Left lung (tissue), 14 donors: ENCODE measurements at regions of chr5 and their contacts with region 1.

Region 1: GRCh38 chr5:154811653-154812365 is 38.6 kb downstream of the FAXDC2 start:
- DNase-seq: peak in 3 of 4 donors; percentile 33 to 67 (median 52)
- ATAC-seq: peak; percentile 89
- H3K4me3 ChIP-seq: no peak overlapping the region
- H3K27ac ChIP-seq: no peak overlapping the region
- H3K4me1 ChIP-seq: peaks cover 0 to 16% of the 10 kb centered on the region in 2 donors
- H3K27me3 ChIP-seq: no peaks in the 10 kb centered on the region
- CTCF ChIP-seq: peak; percentile 68 to 93

Region 2: GRCh38 chr5:154371687-154372086 is 440.1 kb before region 1 on chr5:
- intact Hi-C with region 1: no loop called
- DNase-seq: peak in 1 of 4 donors; percentile 38
- ATAC-seq: peak; percentile 73
- H3K4me3 ChIP-seq: no peak overlapping the region
- H3K27ac ChIP-seq: no peak overlapping the region
- H3K4me1 ChIP-seq: peaks cover 11% of the 10 kb centered on the region in 2 donors
- H3K27me3 ChIP-seq: no peaks in the 10 kb centered on the region
- CTCF ChIP-seq: no peak

Region 3: DNA sequence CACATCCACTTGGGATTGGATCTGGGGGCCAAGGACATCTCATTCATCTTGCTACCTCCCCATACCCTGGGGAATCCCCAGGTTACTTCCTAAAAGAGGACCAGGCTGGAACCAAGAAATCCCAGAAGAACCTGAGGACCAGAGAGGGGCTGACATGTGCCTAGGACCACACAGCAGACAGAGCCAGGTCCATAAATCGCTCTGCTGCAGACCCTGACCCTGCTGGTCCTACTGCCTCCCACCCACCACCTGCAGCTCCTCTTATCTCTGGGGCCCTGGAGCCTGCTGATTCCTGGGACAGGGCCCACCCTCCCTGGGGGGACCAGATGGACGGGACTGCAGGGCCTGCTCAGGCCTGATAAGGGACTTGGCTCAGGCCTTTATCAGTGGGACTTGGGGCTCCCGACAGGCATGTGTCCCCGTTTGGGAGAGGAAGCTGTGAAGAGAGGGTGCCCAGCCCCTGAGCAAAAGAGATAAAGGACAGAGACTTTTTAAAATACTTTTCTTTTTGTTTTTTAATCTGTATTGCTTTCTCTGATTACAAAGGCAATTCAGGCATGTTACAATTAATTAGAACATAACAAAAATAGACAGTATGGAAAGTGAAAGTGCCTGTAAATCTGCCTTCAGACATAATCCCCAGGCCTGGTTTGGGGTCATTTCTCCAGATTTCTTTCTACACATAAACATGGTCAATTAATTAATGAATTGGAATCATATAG is 157.9 kb before region 1 on chr5:
- intact Hi-C with region 1: loop called in 1 of 2 experiments (anchors 5 kb)
- DNase-seq: no peak
- ATAC-seq: no peak
- H3K4me3 ChIP-seq: no peak overlapping the region
- H3K27ac ChIP-seq: peak overlapping the region; percentile 35 to 51
- H3K4me1 ChIP-seq: peaks cover 8 to 19% of the 10 kb centered on the region in 2 donors
- H3K27me3 ChIP-seq: no peaks in the 10 kb centered on the region
- CTCF ChIP-seq: no peak

Region 4: DNA sequence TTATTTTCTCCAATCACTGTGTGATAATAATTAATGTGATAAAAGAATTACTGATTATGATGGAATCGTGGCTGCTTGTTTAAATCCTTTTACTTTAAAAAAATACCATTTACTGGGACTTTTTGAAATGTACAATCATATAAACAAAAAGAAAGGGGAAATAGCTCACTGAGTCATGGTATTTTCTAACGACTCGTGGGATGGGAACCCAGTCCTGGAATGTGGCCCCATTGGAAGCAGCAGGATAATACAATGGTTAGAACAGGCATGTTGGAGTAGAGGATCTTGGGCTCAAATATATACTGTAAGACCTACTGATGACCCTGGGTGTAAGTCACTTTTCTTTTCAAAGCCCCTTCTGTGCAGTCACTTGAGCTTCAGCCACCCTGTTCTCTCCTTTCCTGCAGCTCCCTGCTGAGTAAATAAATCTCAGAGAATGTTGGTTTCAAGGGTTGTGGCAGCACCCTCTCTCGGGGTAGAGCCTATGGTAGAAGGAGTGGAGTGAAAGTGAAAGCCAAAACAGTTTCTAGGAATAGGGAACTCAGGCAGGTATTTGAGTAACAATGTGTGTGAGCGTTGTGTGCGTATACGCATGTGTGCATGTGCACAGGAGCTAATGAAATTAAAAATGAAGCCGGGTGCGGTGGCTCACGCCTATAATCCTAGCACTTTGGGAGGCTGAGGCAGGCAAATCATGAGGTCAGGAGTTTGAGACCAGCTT is 97.4 kb before region 1 on chr5:
- intact Hi-C with region 1: no loop called
- DNase-seq: peak in 2 of 4 donors; percentile 44
- ATAC-seq: peak; percentile 85
- H3K4me3 ChIP-seq: peak overlapping the region in 1 of 2 donors; percentile 24
- H3K27ac ChIP-seq: peak overlapping the region; percentile 65 to 79
- H3K4me1 ChIP-seq: peaks cover 6 to 22% of the 10 kb centered on the region in 2 donors
- H3K27me3 ChIP-seq: no peaks in the 10 kb centered on the region
- CTCF ChIP-seq: no peak

Region 5: GRCh38 chr5:155150012-155150411 is 338.2 kb after region 1 on chr5:
- intact Hi-C with region 1: no loop called
- DNase-seq: no peak
- ATAC-seq: no peak
- H3K4me3 ChIP-seq: no peak overlapping the region
- H3K27ac ChIP-seq: no peak overlapping the region
- H3K4me1 ChIP-seq: no peaks in the 10 kb centered on the region
- H3K27me3 ChIP-seq: no peaks in the 10 kb centered on the region
- CTCF ChIP-seq: no peak